ENCODE measurements at regions of chr9 and their contacts with region 1.

Region 1: DNA sequence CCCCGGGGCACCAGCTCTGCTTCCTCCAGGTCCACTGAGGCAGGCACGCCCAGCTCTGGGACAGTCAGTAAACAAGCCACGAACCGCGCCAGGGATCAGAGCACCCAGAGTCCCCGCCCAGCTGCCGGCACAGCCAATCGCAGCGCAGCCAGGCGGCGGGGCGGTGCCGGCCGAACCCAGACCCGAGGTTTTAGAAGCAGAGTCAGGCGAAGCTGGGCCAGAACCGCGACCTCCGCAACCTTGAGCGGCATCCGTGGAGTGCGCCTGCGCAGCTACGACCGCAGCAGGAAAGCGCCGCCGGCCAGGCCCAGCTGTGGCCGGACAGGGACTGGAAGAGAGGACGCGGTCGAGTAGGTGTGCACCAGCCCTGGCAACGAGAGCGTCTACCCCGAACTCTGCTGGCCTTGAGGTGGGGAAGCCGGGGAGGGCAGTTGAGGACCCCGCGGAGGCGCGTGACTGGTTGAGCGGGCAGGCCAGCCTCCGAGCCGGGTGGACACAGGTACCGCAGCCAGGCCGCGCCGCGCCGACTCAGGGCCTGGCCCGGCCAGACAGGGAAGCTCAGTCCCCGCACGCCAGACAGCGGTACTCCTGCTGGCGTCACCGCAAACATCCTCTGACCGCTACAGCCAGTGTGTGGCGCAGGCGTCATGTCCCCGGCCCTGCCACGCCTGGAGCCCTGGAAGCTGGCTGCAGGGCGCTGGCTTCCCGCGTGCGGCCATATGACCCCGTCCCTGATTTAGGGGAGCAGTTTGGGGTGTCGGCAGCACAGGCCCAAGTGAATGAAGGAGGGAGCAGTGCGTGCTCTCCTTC is at the start of gene CTSL:
- DNase-seq: peak; percentile 98
- H3K4me3 ChIP-seq: peak within 1 kb of the TSS; percentile 59 to 83 (median 72)
- H3K27ac ChIP-seq: peak within 1 kb of the TSS; percentile 94 to 97 (median 95)
- H3K4me1 ChIP-seq: peaks cover 0 to 51% (median 36%) of the 10 kb centered on the region in 4 donors
- H3K27me3 ChIP-seq: no peaks in the 10 kb centered on the region
- CTCF ChIP-seq: peak in 1 of 4 experiments; percentile 19
- EP300 ChIP-seq: peak in 1 of 4 donors; percentile 42
- POLR2A ChIP-seq: peak in 1 of 2 donors; percentile 63
- total RNA-seq, gene CTSL: 107 to 179 (median 147) TPM

Region 2: DNA sequence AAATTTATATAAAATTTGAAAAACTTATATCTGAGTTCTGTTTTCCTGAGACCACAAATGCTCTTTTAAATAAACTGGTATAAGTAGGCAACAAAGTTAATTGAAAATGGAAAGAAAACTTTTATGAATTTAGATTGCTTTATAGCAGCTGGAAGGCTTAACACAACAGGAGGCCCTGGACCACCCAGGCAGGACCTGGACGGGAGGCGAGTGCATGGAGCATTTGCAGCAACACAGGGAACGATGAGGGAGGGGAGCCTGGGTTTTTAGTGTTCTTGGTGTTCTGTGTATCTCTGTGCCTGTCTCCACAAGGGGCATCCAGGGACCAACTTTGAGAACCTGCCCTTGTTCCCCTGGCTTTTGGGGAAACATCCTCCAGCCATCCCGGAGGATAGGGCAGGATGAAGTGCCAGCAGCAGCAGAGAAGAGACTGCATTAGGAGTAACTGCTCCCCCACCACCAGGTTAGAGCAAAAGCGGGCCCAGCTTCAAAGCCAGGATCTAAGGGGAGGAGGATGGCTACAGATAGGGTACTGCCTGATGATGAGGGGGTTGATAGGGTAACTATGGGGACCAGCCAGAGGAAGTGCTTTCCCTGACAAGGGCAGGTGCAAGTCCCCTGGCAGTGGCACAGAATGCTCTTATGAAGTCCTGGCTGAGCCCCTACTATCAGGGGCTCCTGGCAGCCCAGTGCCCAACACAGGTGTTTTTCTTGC is 149.9 kb after region 1 on chr9:
- intact Hi-C with region 1: loop called (anchors 2 kb)
- DNase-seq: no peak
- H3K4me3 ChIP-seq: no peak overlapping the region
- H3K27ac ChIP-seq: peak overlapping the region in 2 of 4 donors; percentile 5 to 84
- H3K4me1 ChIP-seq: peaks cover 0 to 64% (median 48%) of the 10 kb centered on the region in 4 donors
- H3K27me3 ChIP-seq: no peaks in the 10 kb centered on the region
- CTCF ChIP-seq: no peak
- EP300 ChIP-seq: no peak
- POLR2A ChIP-seq: no peak

Region 3: GRCh38 chr9:87973730-87974292 is 247.7 kb after region 1 on chr9:
- intact Hi-C with region 1: loop called (anchors 2 kb)
- DNase-seq: no peak
- H3K4me3 ChIP-seq: peak overlapping the region; percentile 45 to 68 (median 60)
- H3K27ac ChIP-seq: peak overlapping the region; percentile 72 to 84 (median 76)
- H3K4me1 ChIP-seq: peaks cover 0 to 21% (median 11%) of the 10 kb centered on the region in 4 donors
- H3K27me3 ChIP-seq: no peaks in the 10 kb centered on the region
- CTCF ChIP-seq: no peak
- EP300 ChIP-seq: no peak
- POLR2A ChIP-seq: no peak